Mucosa of descending colon (tissue), 3 donors: ENCODE measurements at regions of chr2 and their contacts with region 1.

Region 1: GRCh38 chr2:109702618-109702985 is 88.4 kb downstream of the SOWAHC start:
- DNase-seq: no peak
- ATAC-seq: peak; percentile 74
- H3K4me3 ChIP-seq: no peak overlapping the region
- H3K4me1 ChIP-seq: peaks cover 42% of the 10 kb centered on the region
- CTCF ChIP-seq: no peak

Region 2: GRCh38 chr2:109613922-109614714 is 88.5 kb before region 1 on chr2 and contains the starts of genes SEPTIN10 and SOWAHC:
- intact Hi-C with region 1: loop called in 1 of 2 experiments (anchors 10 kb)
- DNase-seq: peak; percentile 95 to 97 (median 96)
- ATAC-seq: peak; percentile 93
- H3K4me3 ChIP-seq: peak within 1 kb of the TSS; percentile 54
- H3K4me1 ChIP-seq: peaks cover 34% of the 10 kb centered on the region
- CTCF ChIP-seq: no peak
- total RNA-seq, gene SEPTIN10: 79.3 to 112 (median 84.1) TPM
- total RNA-seq, gene SOWAHC: 30.2 to 44.0 (median 35.8) TPM